ENCODE measurements at regions of chr6 and their contacts with region 1.

Region 1: DNA sequence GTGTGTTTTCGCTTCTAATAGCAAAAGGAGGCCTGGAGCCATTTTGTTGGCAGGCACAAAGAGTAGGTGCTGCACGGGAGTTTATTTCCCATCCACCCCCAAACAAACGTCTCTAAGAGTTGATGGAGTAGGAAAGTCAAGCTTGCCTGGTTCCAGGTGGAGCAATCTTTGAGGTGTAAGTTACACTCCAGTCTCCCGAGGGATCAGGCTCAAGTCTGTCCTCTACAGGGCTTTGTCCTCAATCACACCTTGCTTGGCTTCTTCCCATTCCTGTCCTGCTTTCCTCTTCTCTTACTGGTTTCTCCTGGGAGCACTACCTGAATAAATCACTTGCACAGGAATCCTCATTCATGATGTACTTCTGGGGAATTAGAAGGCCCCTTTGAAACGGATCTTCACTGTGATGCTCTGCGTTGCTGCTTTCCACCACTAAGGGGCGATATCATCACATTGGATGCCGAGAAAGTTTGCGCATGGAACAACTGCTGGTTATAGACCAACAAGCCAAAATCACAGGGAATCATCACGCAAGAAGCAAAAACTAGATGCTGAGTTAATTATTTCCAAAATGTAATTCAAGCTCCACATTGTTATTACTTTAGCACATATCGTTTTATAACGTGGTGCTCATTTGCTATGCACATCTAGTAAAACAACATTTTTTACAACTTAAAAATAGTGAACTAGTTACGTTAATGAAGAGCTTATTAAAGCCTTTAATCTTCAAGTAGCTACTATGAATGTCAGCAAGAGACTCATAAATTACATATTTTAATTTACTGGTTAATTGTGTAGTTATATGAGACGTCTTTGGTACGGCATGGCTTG is 156.8 kb downstream of the DNAH8 start:
- DNase-seq: peak; percentile 76
- ATAC-seq: peak; percentile 69
- H3K4me3 Mint-ChIP-seq: no peak overlapping the region
- H3K27ac Mint-ChIP-seq: no peak overlapping the region
- H3K4me1 Mint-ChIP-seq: peaks cover 22% of the 10 kb centered on the region
- H3K27me3 Mint-ChIP-seq: peaks cover 5% of the 10 kb centered on the region
- CTCF ChIP-seq: peak; percentile 93

Region 2: GRCh38 chr6:38762848-38763247 is 109.1 kb before region 1 on chr6:
- CTCF ChIA-PET with region 1: no interaction called
- POLR2A ChIA-PET with region 1: no interaction called
- intact Hi-C with region 1: no loop called
- DNase-seq: no peak
- ATAC-seq: no peak
- H3K4me3 Mint-ChIP-seq: no peak overlapping the region
- H3K27ac Mint-ChIP-seq: no peak overlapping the region
- H3K4me1 Mint-ChIP-seq: no peaks in the 10 kb centered on the region
- H3K27me3 Mint-ChIP-seq: peaks cover 22% of the 10 kb centered on the region
- CTCF ChIP-seq: no peak

Region 3: DNA sequence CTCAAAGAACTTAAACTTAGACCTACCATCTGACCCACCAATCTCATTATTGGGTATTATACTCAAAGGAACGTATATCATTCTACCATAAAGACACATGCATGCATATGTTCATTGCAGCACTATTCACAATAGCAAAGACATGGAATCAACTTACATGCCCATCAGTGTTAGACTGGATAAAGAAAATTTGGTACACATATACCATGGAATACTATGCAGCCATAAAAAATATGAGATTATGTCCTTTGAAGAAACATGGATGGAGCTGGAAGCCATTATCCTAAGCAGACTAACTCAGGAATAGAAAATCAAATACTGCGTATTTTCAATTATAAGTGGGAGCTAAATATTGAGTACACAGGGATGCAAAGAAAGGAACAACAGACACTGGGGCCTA is 10.2 kb after region 1 on chr6:
- CTCF ChIA-PET with region 1: interaction called, 34 read pairs
- POLR2A ChIA-PET with region 1: no interaction called
- intact Hi-C with region 1: no loop called
- DNase-seq: no peak
- ATAC-seq: no peak
- H3K4me3 Mint-ChIP-seq: no peak overlapping the region
- H3K27ac Mint-ChIP-seq: no peak overlapping the region
- H3K4me1 Mint-ChIP-seq: peaks cover 4% of the 10 kb centered on the region
- H3K27me3 Mint-ChIP-seq: no peaks in the 10 kb centered on the region
- CTCF ChIP-seq: no peak

Region 4: DNA sequence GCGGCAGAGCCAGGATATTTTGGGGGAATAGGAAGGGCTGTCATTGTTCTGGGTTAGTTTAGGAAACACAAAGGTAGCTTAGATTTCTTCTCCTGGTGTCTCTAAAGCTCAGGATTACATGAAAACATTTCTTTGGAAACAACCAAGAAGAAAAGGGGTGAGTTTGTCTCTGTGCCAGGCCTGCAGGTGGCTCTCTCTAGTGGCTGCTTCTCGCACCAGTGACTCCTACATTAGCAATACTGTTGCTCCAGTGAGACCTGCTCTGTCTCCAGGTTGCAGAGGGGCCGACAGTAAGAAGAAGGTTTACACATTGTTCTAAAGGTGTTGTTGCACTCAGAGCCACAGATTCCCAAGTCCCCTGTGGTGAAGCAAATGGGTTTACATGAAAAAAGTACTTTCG is 72.0 kb after region 1 on chr6:
- CTCF ChIA-PET with region 1: interaction called, 10 read pairs
- POLR2A ChIA-PET with region 1: no interaction called
- intact Hi-C with region 1: no loop called
- DNase-seq: no peak
- ATAC-seq: no peak
- H3K4me3 Mint-ChIP-seq: no peak overlapping the region
- H3K27ac Mint-ChIP-seq: no peak overlapping the region
- H3K4me1 Mint-ChIP-seq: no peaks in the 10 kb centered on the region
- H3K27me3 Mint-ChIP-seq: no peaks in the 10 kb centered on the region
- CTCF ChIP-seq: no peak

Region 5: GRCh38 chr6:38997128-38997761 is 125.3 kb after region 1 on chr6:
- CTCF ChIA-PET with region 1: interaction called, 13 read pairs
- POLR2A ChIA-PET with region 1: no interaction called
- intact Hi-C with region 1: no loop called
- DNase-seq: peak; percentile 74
- ATAC-seq: peak; percentile 66
- H3K4me3 Mint-ChIP-seq: no peak overlapping the region
- H3K27ac Mint-ChIP-seq: no peak overlapping the region
- H3K4me1 Mint-ChIP-seq: no peaks in the 10 kb centered on the region
- H3K27me3 Mint-ChIP-seq: peaks cover 32% of the 10 kb centered on the region
- CTCF ChIP-seq: peak; percentile 72

Region 6: DNA sequence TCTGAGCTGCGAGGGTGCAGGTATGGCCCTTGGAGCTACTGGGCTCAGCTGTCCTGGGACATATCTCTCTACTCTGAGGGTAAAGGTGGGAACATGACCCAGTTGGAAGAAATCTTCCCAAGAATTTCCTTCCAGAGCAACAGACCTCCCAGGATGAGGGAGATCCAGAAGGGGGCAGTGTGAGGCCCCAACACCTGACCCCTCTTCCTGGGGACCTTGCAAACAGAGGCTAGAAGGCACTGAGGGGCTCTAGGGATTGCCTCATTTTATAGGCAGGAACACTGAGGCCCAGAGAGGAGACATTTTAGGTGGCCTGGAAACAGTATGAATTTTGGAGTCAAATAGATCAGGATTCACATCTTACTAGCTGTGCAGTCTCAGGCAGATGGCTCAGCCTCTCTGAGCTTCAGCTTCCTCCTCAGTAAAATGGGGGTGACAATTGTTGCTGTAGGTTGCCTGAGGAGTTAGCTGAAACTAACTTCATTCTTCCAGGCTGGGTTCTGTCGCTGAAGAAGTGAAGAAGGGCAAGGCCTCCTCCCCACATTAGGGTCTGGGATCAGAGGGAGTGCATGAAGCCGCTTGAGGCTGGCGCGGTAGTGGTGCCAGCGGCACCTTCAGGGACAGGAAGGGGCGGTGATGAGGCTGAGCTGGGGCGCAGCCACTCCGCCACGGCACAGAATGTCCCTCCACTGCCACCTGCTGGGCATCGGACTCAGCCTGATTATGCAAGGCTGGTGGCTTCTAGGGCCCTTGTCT is 430.9 kb after region 1 on chr6:
- CTCF ChIA-PET with region 1: interaction called, 27 read pairs
- POLR2A ChIA-PET with region 1: no interaction called
- intact Hi-C with region 1: loop called (anchors 5 kb)
- DNase-seq: peak; percentile 96
- ATAC-seq: peak; percentile 99
- H3K4me3 Mint-ChIP-seq: peak overlapping the region; percentile 44
- H3K27ac Mint-ChIP-seq: peak overlapping the region; percentile 60
- H3K4me1 Mint-ChIP-seq: peaks cover 4% of the 10 kb centered on the region
- H3K27me3 Mint-ChIP-seq: no peaks in the 10 kb centered on the region
- CTCF ChIP-seq: peak; percentile 90

Measured in activated CD8-positive, alpha-beta T cell treated with anti-CD3 and anti-CD28 coated beads for 36 hours (primary cell).